Caco-2 (cell line): ENCODE measurements at regions of chr7 and their contacts with region 1.

Region 1: GRCh38 chr7:115851291-115851690 is 179.3 kb downstream of the TFEC start:
- DNase-seq: peak in 1 of 2 experiments; percentile 39
- H3K4me3 ChIP-seq: no peak overlapping the region
- H3K4me3 Mint-ChIP-seq: no peak overlapping the region
- H3K27ac Mint-ChIP-seq: no peak overlapping the region
- H3K4me1 ChIP-seq: no peaks in the 10 kb centered on the region
- H3K4me1 Mint-ChIP-seq: no peaks in the 10 kb centered on the region
- H3K27me3 ChIP-seq: no peaks in the 10 kb centered on the region
- H3K27me3 Mint-ChIP-seq: no peaks in the 10 kb centered on the region
- CTCF ChIP-seq: peak in 1 of 2 experiments; percentile 27

Region 2: GRCh38 chr7:114085592-114086501 is 1765.4 kb before region 1 on chr7:
- CTCF ChIA-PET with region 1: no interaction called
- POLR2A ChIA-PET with region 1: no interaction called
- intact Hi-C with region 1: loop called (anchors 10 kb)
- DNase-seq: peak in 1 of 2 experiments; percentile 26
- H3K4me3 ChIP-seq: peak overlapping the region; percentile 35
- H3K4me3 Mint-ChIP-seq: peak overlapping the region; percentile 78
- H3K27ac Mint-ChIP-seq: no peak overlapping the region
- H3K4me1 ChIP-seq: peaks cover 5% of the 10 kb centered on the region; the same call in 1 of the 2 replicates
- H3K4me1 Mint-ChIP-seq: peaks cover 6% of the 10 kb centered on the region
- H3K27me3 ChIP-seq: peaks cover 13% of the 10 kb centered on the region
- H3K27me3 Mint-ChIP-seq: peaks cover 31% of the 10 kb centered on the region
- CTCF ChIP-seq: no peak

Region 3: GRCh38 chr7:115356139-115356746 is 495.0 kb before region 1 on chr7:
- CTCF ChIA-PET with region 1: no interaction called
- POLR2A ChIA-PET with region 1: no interaction called
- intact Hi-C with region 1: loop called (anchors 2 kb)
- DNase-seq: no peak
- H3K4me3 ChIP-seq: no peak overlapping the region
- H3K4me3 Mint-ChIP-seq: no peak overlapping the region
- H3K27ac Mint-ChIP-seq: no peak overlapping the region
- H3K4me1 ChIP-seq: no peaks in the 10 kb centered on the region
- H3K4me1 Mint-ChIP-seq: no peaks in the 10 kb centered on the region
- H3K27me3 ChIP-seq: no peaks in the 10 kb centered on the region
- H3K27me3 Mint-ChIP-seq: no peaks in the 10 kb centered on the region
- CTCF ChIP-seq: peak; percentile 28 to 51

Region 4: DNA sequence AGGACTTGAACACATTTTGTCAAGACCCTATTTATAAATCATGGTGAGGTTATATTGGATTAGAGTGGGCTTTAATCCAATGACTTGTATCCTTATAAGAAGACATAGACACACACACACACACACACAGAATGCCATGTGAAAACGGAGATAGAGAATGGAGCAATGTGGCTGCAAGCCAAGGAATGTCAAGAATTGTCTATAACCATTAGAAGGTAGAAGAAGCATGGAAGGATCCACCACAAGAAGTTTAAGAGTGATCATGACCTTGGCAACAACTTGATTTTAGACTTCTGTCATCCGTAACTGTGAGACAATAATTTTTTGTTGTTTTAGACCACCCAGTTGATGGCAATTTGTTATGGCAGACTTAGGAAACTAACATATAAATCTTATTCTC is 334.9 kb before region 1 on chr7:
- CTCF ChIA-PET with region 1: no interaction called
- POLR2A ChIA-PET with region 1: no interaction called
- intact Hi-C with region 1: no loop called
- DNase-seq: no peak
- H3K4me3 ChIP-seq: no peak overlapping the region
- H3K4me3 Mint-ChIP-seq: no peak overlapping the region
- H3K27ac Mint-ChIP-seq: no peak overlapping the region
- H3K4me1 ChIP-seq: no peaks in the 10 kb centered on the region
- H3K4me1 Mint-ChIP-seq: no peaks in the 10 kb centered on the region
- H3K27me3 ChIP-seq: no peaks in the 10 kb centered on the region
- H3K27me3 Mint-ChIP-seq: no peaks in the 10 kb centered on the region
- CTCF ChIP-seq: no peak

Region 5: GRCh38 chr7:115707258-115708012 is 143.9 kb before region 1 on chr7:
- CTCF ChIA-PET with region 1: interaction called, 5 read pairs
- POLR2A ChIA-PET with region 1: no interaction called
- intact Hi-C with region 1: loop called (anchors 1 kb)
- DNase-seq: peak; percentile 38 to 47
- H3K4me3 ChIP-seq: no peak overlapping the region
- H3K4me3 Mint-ChIP-seq: no peak overlapping the region
- H3K27ac Mint-ChIP-seq: peak overlapping the region; percentile 62
- H3K4me1 ChIP-seq: no peaks in the 10 kb centered on the region
- H3K4me1 Mint-ChIP-seq: no peaks in the 10 kb centered on the region
- H3K27me3 ChIP-seq: no peaks in the 10 kb centered on the region
- H3K27me3 Mint-ChIP-seq: peaks cover 6% of the 10 kb centered on the region
- CTCF ChIP-seq: peak; percentile 44 to 51

Region 6: GRCh38 chr7:115910541-115911164 is 59.4 kb after region 1 on chr7:
- CTCF ChIA-PET with region 1: no interaction called
- POLR2A ChIA-PET with region 1: no interaction called
- intact Hi-C with region 1: loop called (anchors 1 kb)
- DNase-seq: peak in 1 of 2 experiments; percentile 25
- H3K4me3 ChIP-seq: no peak overlapping the region
- H3K4me3 Mint-ChIP-seq: no peak overlapping the region
- H3K27ac Mint-ChIP-seq: no peak overlapping the region
- H3K4me1 ChIP-seq: no peaks in the 10 kb centered on the region
- H3K4me1 Mint-ChIP-seq: peaks cover 5% of the 10 kb centered on the region
- H3K27me3 ChIP-seq: no peaks in the 10 kb centered on the region
- H3K27me3 Mint-ChIP-seq: no peaks in the 10 kb centered on the region
- CTCF ChIP-seq: peak; percentile 63 to 69